ENCODE measurements at regions of chr1 and their contacts with region 1.

Region 1: GRCh38 chr1:23916209-23917131 is 3.3 kb upstream of the CNR2 start:
- H3K4me3 ChIP-seq: no peak overlapping the region
- H3K27ac ChIP-seq: no peak overlapping the region
- H3K4me1 ChIP-seq: no peaks in the 10 kb centered on the region
- CTCF ChIP-seq: peak; percentile 73

Region 2: DNA sequence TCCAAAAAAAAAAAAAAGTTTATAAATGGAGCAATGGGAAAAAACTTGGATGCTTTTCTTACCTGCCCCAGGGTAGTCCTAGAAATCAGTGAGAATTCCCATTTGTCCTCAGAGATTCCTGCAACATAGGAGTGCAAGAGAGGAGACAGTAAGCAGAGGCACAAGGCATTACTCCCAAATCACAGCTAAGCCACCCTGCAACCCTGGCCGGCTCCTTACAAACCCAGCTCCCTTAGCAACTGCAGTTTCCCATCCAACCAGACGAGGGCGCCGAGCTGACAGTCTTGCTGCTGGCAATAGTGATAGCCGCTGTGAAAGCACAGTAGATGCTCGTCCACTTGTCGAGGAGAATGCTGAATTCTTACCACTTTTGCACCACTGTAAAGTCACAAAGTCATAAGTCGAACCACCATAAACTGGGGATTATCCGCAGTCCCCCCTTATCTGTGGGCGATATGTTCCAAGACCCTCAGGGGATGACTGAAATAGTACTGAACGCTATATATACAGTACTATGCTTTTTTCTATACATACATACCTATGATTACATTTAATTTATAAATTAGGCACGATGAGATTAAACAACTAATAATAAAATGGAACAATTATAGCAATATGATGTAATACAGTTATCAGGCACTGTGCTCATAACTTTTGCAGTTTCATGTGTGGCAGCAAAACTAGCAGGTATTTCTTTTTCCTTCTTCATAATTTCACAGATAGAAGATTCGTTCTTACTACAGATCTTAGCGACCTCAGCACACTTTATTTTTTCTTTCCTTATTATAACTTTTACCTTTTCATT is 144.2 kb before region 1 on chr1:
- CTCF ChIA-PET with region 1: interaction called, 29 read pairs
- POLR2A ChIA-PET with region 1: interaction called, 5 read pairs
- H3K4me3 ChIP-seq: no peak overlapping the region
- H3K27ac ChIP-seq: no peak overlapping the region
- H3K4me1 ChIP-seq: no peaks in the 10 kb centered on the region
- CTCF ChIP-seq: peak; percentile 83

Region 3: DNA sequence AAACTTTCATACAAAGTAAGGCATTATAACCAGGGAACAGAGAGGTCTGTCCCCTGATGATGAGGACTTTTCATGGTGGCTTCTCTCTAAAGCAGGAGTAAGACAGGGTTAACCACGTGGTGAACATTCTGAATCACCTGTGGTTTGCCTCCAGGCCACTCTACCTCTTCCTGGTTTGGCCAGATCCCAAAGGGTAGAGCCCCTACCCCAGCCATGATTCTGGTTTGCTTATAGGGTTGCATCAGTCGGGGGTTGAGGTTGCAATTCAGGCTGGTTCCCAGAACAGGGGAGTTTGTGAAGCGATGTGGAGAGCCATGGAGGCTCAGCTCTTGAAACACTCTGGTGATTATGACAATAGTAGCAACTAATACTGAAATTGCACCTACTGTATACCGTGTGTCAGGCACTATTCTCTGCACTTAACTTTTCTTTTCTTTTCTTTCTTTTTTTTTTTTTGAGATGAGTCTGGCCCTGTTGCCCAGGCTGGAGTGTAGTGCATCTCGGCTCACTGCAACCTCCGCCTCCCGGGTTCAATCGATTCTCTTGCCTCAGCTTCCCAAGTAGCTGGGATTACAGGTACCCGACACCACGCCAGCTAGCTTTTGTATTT is 11.6 kb before region 1 on chr1:
- CTCF ChIA-PET with region 1: interaction called, 10 read pairs
- POLR2A ChIA-PET with region 1: no interaction called
- H3K4me3 ChIP-seq: no peak overlapping the region
- H3K27ac ChIP-seq: no peak overlapping the region
- H3K4me1 ChIP-seq: no peaks in the 10 kb centered on the region
- CTCF ChIP-seq: no peak